Sciatic nerve (tissue), 2 donors: ENCODE measurements at regions of chr7 and their contacts with region 1.

Region 1: DNA sequence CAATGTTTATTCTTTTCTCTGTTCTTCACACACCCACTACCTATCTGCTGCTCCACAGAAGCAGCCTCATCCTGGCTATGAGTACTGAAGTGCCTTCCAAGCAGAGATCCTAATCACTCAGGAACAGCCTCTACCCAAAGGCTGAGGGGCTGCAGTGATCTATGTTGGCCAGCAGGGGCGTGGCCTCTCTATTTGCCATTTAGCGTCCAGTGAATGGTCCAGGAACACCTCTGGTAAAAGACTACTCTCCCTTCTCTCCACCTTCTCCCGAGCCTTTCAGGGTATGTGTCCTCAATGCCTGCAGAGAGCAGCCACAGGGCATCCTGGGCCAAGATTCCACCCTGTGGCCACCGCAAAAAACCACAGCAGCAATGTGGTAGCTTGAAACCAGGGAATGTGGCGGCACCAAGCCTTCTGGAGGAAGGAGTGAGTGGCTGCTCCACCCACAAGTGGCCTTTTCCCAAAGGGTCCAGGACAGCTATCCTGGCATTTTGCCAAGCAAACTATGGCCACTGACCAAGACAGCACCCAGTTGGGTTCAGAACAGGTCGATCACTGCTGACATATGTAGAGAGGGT is 70.9 kb downstream of the SYPL1 start:
- DNase-seq: no peak
- ATAC-seq: peak; percentile 13

Region 2: DNA sequence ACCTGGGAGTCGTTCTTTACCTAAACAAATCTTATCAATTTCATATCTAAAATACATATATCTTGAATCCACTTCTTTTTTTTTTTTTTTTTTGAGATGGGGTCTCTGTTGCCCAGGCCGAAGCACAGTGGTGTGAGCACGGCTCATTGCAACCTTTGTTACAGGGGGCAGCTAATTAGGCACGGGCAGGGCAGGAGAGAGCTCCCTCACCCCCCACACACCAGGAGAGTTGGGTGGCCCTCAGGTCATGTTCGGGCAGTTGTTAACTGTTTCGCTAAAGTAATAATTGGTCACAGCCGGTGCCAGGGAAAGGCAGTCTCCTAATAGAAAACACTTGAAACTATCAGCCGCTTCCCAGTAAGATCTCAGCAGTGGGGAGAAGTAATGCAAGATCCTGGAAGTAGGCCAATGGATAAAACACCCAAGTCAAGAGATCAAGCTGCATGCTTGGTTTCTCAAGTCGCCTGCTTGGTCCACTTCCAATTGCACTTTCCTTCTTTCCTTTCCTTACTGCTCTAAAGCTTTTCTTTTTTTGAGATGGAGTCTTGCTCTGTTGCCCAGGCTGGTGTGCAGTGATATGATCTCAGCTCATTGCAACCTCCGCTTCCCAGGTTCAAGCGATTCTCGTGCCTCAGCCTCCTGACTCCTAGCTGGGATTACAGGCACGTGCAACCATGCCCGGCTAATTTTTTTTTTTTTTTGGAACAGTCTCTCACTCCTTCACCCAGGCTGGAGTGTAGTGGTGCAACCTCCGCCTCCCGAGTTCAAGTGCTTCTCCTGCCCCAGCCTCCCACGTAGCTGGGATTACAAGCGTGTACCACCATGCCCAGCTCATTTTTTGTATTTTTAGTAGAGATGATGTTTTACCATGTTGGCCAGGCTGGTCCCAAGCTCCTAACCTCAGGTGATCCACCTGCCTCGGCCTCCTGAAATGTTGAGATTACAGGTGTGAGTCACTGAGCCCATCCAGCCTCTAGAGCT is 438.6 kb before region 1 on chr7:
- intact Hi-C with region 1: no loop called
- DNase-seq: no peak
- ATAC-seq: peak; percentile 62

Region 3: GRCh38 chr7:105652359-105652993 is 388.8 kb before region 1 on chr7:
- intact Hi-C with region 1: loop called (anchors 5 kb)
- DNase-seq: peak; percentile 90
- ATAC-seq: peak; percentile 93

Region 4: GRCh38 chr7:105759670-105760550 is 281.3 kb before region 1 on chr7:
- intact Hi-C with region 1: loop called (anchors 5 kb)
- DNase-seq: peak; percentile 70
- ATAC-seq: peak; percentile 83

Region 5: DNA sequence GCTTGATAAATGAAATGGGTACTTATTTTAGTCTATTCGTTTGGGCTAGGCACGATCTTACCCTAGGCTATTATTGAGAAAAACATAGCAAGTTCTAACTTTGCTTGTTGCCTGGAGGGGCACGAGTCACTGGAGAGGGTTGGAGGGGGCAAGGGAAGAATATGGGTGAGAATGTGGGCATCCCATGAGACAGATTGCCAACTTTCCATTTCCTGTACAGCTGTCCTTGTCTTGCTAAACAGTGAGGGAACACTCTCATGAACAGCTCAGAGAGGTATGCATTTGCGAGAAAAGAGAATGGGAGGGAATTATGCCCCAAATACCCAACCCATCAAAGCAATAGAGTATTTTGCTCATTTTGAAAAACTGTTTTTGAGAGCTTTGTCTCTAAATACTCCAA is 69.0 kb before region 1 on chr7:
- intact Hi-C with region 1: no loop called
- DNase-seq: no peak
- ATAC-seq: no peak